T-cell (primary cell): ENCODE measurements at regions of chr22 and their contacts with region 1.

Region 1: GRCh38 chr22:37148742-37149665 is 712 bp downstream of the IL2RB start:
- DNase-seq: peak in 1 of 35 experiments; percentile 20
- ATAC-seq: peak in 2 of 4 experiments; percentile 12 to 18
- H3K4me3 ChIP-seq: peak overlapping the region; percentile 56 to 96
- H3K4me3 Mint-ChIP-seq: peak overlapping the region; percentile 75 to 93 (median 87)
- H3K27ac ChIP-seq: peak overlapping the region; percentile 94
- H3K27ac Mint-ChIP-seq: peak overlapping the region; percentile 96 to 98
- H3K4me1 ChIP-seq: peaks cover 11 to 58% of the 10 kb centered on the region in 2 experiments
- H3K4me1 Mint-ChIP-seq: peaks cover 65 to 73% (median 72%) of the 10 kb centered on the region in 3 donors
- H3K27me3 ChIP-seq: no peaks in the 10 kb centered on the region
- H3K27me3 Mint-ChIP-seq: no peaks in the 10 kb centered on the region

Region 2: DNA sequence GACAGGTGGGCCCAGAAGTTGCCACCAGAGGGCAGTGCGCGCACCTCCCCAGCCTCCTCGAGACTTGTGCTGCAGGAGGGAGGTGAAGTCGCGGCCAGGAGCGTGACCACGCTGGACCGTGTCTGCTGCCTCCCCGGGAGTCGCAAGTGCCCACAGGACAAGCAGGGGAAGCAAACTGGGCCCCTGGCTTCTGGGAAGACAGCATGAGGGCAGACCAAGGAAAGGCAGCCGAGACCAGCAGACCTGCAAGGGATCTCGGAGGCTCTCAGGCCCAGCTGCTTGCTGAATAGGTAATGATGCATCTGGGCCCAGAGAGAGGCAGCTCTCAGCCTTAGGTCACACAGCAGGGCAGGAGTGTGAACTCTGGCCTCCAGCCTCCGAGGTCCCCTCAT is 17.7 kb after region 1 on chr22:
- CTCF ChIA-PET with region 1: interaction called in 1 of 2 experiments, 20 read pairs
- POLR2A ChIA-PET with region 1: interaction called in 1 of 2 experiments, 3 read pairs
- DNase-seq: peak; percentile 54 to 92 (median 78)
- ATAC-seq: peak; percentile 60 to 76 (median 68)
- H3K4me3 ChIP-seq: peak overlapping the region in 1 of 2 donors; percentile 31
- H3K4me3 Mint-ChIP-seq: peak overlapping the region; percentile 74 to 85 (median 82)
- H3K27ac ChIP-seq: peak overlapping the region; percentile 45
- H3K27ac Mint-ChIP-seq: peak overlapping the region; percentile 96 to 97
- H3K4me1 ChIP-seq: peaks cover 20 to 94% of the 10 kb centered on the region in 2 experiments
- H3K4me1 Mint-ChIP-seq: peaks cover 84 to 97% (median 94%) of the 10 kb centered on the region in 3 donors
- H3K27me3 ChIP-seq: no peaks in the 10 kb centered on the region
- H3K27me3 Mint-ChIP-seq: no peaks in the 10 kb centered on the region